ENCODE measurements at regions of chr9 and their contacts with region 1.

Region 1: GRCh38 chr9:14096258-14096922 is 217.6 kb downstream of the NFIB start:
- DNase-seq: peak in 1 of 2 donors; percentile 73
- H3K4me3 ChIP-seq: peak overlapping the region; percentile 22 to 50
- H3K27ac ChIP-seq: peak overlapping the region; percentile 76 to 84
- H3K4me1 ChIP-seq: peaks cover 9 to 21% of the 10 kb centered on the region in 2 donors
- H3K27me3 ChIP-seq: no peaks in the 10 kb centered on the region
- CTCF ChIP-seq: no peak

Region 2: GRCh38 chr9:13427587-13427986 is 668.8 kb before region 1 on chr9:
- intact Hi-C with region 1: loop called (anchors 10 kb)
- DNase-seq: no peak
- H3K4me3 ChIP-seq: no peak overlapping the region
- H3K27ac ChIP-seq: no peak overlapping the region
- H3K4me1 ChIP-seq: no peaks in the 10 kb centered on the region
- H3K27me3 ChIP-seq: no peaks in the 10 kb centered on the region
- CTCF ChIP-seq: peak; percentile 52 to 79 (median 68)

Region 3: DNA sequence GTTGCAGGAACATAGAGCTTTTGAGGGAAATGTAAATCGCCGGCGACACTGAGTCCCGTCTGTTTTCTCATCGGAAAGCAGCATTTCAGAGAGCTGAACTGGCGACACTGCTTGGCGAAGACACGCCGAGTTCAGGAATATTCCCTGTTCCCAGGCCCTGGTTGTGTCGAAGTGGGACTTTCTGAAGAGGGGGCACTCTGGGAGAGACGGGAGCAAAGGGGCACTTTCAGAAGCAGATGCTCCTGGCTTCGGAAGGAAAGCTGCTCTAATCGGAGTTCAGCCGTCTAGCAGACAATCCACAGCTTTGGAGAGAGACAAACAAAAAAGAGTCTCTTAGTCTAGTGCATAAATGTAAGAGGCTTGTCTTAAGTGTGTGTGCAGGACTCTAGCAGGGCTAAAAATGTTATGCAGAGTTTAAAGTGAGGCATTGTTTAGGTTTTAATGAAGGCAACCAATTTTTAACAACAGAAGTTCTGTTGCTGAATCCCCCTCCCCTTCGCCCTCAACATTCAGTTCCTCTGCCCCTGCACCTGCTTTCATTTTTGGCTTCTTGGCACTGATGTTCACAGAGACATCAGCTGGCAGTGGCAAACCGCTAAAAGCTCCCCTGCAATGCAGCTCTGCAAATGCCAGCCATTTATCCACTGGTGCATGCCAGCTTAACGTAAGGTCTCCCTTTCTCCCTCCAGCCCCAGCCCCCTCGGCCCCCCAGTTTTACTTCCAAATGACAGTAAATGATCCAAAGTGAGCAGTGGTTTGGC is 527.4 kb before region 1 on chr9:
- intact Hi-C with region 1: loop called (anchors 5 kb)
- DNase-seq: no peak
- H3K4me3 ChIP-seq: peak overlapping the region; percentile 11 to 56
- H3K27ac ChIP-seq: peak overlapping the region; percentile 91
- H3K4me1 ChIP-seq: peaks cover 11 to 19% of the 10 kb centered on the region in 2 donors
- H3K27me3 ChIP-seq: no peaks in the 10 kb centered on the region
- CTCF ChIP-seq: no peak

Region 4: DNA sequence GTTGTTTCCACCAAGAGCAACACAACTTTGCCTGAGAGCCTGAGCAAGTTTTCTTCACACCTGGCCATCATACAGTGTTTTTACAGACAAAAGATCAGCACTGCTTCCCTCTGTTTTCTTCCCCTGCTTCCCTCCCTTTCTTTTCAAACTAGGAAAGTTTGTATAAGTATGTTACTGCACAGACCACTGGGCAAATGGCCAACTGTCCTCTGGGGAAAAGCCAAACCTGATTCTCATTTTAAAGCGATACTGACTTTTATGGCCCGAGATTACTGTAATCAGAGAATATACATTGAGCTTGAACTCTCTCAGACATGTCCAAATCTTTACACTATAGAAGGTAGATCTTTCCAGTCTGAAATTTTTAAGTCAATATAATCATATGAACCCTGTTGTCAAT is 197.4 kb before region 1 on chr9:
- intact Hi-C with region 1: loop called (anchors 10 kb)
- DNase-seq: no peak
- H3K4me3 ChIP-seq: no peak overlapping the region
- H3K27ac ChIP-seq: peak overlapping the region in 1 of 2 donors; percentile 62
- H3K4me1 ChIP-seq: peaks cover 2 to 30% of the 10 kb centered on the region in 2 donors
- H3K27me3 ChIP-seq: no peaks in the 10 kb centered on the region
- CTCF ChIP-seq: no peak

Region 5: DNA sequence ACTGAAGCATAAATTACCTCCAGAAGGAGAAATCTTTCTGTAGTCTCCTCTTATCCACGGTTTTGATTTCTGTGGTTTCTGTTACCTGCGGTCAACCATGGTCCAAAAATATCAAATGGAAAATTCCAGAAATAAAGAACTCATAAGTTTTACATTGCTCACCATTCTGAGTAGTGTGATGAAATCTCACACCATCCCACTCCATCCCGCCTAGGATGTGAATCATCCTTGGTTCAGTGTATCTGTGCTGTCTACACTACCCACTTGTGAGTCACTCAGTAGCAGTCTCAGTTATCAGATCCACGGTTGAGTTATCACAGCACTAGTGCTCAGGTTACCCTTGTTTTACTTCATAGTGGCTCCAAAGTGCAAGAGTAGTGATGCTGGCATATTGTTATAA is 153.7 kb before region 1 on chr9:
- intact Hi-C with region 1: no loop called
- DNase-seq: peak in 1 of 2 donors; percentile 70
- H3K4me3 ChIP-seq: no peak overlapping the region
- H3K27ac ChIP-seq: no peak overlapping the region
- H3K4me1 ChIP-seq: peaks cover 0 to 8% of the 10 kb centered on the region in 2 donors
- H3K27me3 ChIP-seq: no peaks in the 10 kb centered on the region
- CTCF ChIP-seq: no peak

Region 6: DNA sequence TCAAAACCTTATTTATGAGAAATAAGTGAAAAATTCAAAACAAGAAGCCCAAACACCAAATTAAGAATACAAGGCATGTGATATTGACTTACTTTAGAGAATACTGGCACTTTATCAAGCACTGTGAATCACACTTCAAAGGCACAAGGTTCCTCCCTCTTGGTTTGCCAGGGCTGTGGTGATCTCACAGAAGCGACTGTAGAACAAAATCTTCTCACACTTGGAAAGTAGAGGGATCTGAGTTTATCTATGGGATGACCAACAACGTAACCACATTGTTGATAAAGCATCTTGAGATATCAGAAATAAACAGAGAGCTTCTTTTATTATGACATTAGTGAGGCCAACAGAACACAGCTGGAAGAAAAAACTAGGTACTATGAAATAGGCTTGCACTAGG is 78.3 kb before region 1 on chr9:
- intact Hi-C with region 1: no loop called
- DNase-seq: no peak
- H3K4me3 ChIP-seq: no peak overlapping the region
- H3K27ac ChIP-seq: no peak overlapping the region
- H3K4me1 ChIP-seq: no peaks in the 10 kb centered on the region
- H3K27me3 ChIP-seq: no peaks in the 10 kb centered on the region
- CTCF ChIP-seq: no peak

Region 7: DNA sequence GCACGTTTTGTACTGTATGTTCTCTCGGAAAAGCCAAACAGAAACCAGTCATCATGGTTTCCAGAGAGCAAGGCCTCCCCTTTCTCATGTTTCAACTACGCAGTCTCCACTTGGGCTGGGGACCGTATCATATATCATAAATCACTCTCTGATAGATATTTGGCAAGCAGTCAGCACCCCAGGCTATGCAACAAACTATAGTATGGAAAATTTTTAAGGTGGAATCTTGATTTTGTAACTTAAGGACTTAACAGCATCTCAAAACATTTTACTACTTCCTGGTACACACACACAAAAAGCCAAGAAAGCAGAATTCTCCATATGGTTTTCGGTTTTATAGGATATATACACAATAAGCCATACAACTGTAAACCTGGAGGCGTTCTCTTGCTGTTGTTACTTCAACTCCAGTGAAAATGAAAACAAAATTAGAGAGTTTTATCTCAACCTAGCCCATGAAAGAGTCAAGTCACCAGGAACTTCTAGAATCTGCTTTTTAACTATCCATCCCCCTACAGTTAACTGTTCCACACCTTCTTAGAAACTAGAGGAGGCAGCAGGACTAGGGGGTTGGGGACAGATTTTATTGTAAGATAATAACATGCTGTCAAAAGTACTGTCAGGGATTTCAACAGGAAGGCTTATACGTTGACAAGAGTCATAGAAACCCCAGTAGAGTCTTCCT is 65.9 kb before region 1 on chr9:
- intact Hi-C with region 1: loop called (anchors 5 kb)
- DNase-seq: no peak
- H3K4me3 ChIP-seq: peak overlapping the region; percentile 39 to 58
- H3K27ac ChIP-seq: peak overlapping the region; percentile 80 to 84
- H3K4me1 ChIP-seq: peaks cover 6 to 24% of the 10 kb centered on the region in 2 donors
- H3K27me3 ChIP-seq: no peaks in the 10 kb centered on the region
- CTCF ChIP-seq: no peak

Region 8: DNA sequence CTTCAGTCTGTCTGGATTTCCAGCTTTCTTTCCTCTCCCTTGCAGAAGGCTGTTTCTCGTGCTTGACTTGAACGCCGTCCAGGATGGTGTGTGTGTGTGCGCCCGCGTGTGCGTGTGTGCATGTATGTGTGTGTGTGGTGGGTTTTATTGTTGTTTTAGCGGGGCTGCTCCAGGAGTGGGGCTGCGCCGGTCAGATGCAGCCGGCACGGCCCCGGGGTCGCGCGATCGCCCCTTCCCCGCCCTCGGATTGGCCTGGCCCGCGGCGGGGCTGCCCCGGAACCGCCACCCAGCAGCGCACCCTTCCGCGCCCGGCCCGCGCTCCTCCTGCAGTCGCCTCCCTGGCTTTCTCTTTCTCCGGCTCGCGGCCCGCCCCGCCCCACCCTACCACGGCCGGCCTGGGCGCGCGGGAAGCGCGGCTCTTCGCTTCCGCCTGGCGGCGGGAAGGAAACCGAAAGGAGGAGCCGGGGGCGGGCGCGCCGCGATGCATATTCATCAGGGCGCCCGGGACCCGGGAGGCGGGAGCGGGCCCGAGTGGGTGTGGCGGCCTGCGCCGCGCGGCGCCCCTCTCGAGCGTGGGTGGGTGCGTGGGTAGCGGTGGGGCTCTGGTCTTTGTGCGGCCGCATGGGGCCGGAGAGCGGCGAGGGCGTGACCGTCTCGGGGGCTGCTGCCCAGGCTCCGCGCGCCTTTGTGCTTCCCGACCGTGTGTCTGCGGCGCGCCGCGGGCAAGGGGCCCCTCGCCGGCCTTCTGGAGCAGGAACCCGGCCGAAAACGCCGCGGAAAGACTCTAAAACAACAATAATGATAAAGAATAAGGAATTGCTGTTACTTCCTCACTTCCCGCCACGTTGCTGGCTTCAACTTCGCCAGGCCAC is 226.1 kb after region 1 on chr9:
- intact Hi-C with region 1: loop called (anchors 2 kb)
- DNase-seq: peak; percentile 51 to 94
- H3K4me3 ChIP-seq: peak overlapping the region; percentile 88 to 95
- H3K27ac ChIP-seq: peak overlapping the region; percentile 96 to 98
- H3K4me1 ChIP-seq: peaks cover 7 to 24% of the 10 kb centered on the region in 2 donors
- H3K27me3 ChIP-seq: no peaks in the 10 kb centered on the region
- CTCF ChIP-seq: peak; percentile 47 to 69 (median 63)

Measured in ascending aorta (tissue), 2 donors.